Breast epithelium (tissue), 4 donors: ENCODE measurements at regions of chr5 and their contacts with region 1.

Region 1: DNA sequence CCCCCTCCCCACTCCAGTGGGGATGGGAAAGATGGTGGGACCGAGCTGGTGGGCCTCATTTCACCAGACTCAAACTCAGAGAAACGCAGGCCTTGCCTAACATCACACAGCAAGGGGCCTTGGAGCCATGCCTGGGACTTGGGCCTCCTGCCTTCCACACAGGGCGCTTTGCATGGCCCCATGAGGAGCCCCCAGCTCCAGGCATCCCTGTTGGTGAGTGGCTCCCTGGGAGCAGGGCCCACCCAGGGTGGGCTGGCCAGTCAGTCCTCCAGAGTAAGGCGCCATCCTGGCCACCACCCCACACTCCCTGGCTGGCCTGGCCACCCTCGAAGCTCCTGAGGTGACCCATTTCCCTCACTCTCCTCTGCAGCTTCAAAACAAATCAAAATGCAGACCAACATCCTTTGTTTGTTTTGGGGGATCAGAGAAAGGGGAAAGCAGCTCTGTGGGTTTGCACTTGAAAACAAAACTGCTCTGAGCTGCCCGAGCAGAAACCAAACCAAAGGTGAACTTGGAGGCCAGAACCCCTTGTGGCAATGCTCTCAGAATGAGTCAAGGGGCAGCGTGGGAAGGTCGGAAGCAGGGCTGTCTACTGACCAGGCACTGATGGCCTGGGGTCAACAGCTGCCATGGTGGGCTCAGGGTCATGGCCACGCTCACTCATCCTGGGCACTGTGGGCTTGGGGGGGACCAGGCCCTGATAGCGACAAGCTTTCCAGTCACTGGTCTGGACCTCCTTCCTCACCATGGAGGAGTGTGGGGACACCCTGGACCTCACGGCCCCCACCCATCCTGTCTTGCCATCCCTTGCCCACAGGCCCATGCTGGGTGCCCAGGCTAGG is 37.0 kb upstream of the VDAC1 start:
- DNase-seq: no peak
- H3K4me3 ChIP-seq: no peak overlapping the region
- H3K27ac ChIP-seq: no peak overlapping the region
- H3K4me1 ChIP-seq: no peaks in the 10 kb centered on the region
- H3K27me3 ChIP-seq: no peaks in the 10 kb centered on the region
- CTCF ChIP-seq: no peak
- POLR2A ChIP-seq: no peak

Region 2: GRCh38 chr5:133539818-133540217 is 502.0 kb before region 1 on chr5:
- intact Hi-C with region 1: loop called (anchors 5 kb)
- DNase-seq: no peak
- H3K4me3 ChIP-seq: no peak overlapping the region
- H3K27ac ChIP-seq: no peak overlapping the region
- H3K4me1 ChIP-seq: no peaks in the 10 kb centered on the region
- H3K27me3 ChIP-seq: no peaks in the 10 kb centered on the region
- CTCF ChIP-seq: no peak
- POLR2A ChIP-seq: no peak

Region 3: GRCh38 chr5:134138416-134139376 is 96.9 kb after region 1 on chr5:
- intact Hi-C with region 1: loop called (anchors 10 kb)
- DNase-seq: peak; percentile 16 to 43
- H3K4me3 ChIP-seq: no peak overlapping the region
- H3K27ac ChIP-seq: peak overlapping the region; percentile 29 to 33
- H3K4me1 ChIP-seq: peaks cover 2 to 6% of the 10 kb centered on the region in 2 donors
- H3K27me3 ChIP-seq: no peaks in the 10 kb centered on the region
- CTCF ChIP-seq: no peak
- POLR2A ChIP-seq: no peak

Region 4: DNA sequence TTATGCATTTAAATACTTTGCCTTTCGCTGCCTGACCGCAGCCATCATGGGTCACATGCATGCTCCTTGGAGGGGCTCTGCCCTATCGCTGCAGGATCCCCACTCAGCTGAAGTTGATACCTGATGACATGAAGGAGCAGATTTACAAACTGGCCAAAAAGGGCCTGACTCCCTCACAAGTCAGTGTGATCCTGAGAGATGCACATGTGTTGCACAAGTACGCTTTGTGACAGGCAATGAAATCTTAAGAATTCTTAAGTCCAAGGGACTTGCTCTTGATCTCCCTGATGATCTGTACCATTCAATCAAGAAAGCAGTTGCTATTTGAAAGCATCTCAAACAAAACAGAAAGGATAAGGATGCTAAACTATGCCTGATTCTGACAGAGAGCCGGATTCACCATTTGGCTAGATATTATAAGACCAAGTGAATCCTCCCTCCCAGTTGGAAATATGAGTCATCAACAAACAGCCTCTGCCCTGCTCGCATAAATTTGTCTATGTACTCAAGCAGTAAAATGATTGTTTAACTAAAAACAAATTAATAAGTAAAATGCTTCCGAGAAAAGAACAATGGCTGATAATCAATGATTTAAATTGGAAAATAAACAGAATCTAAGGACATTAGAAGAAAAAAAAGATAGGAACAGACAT is 225.7 kb after region 1 on chr5:
- intact Hi-C with region 1: no loop called
- DNase-seq: no peak
- H3K4me3 ChIP-seq: no peak overlapping the region
- H3K27ac ChIP-seq: no peak overlapping the region
- H3K4me1 ChIP-seq: no peaks in the 10 kb centered on the region
- H3K27me3 ChIP-seq: no peaks in the 10 kb centered on the region
- CTCF ChIP-seq: no peak
- POLR2A ChIP-seq: no peak